Left cardiac atrium (tissue), 4 donors: ENCODE measurements at regions of chr14 and their contacts with region 1.

Region 1: GRCh38 chr14:73524493-73524892 is 12.4 kb upstream of the ACOT1 start:
- DNase-seq: no peak
- ATAC-seq: no peak

Region 2: DNA sequence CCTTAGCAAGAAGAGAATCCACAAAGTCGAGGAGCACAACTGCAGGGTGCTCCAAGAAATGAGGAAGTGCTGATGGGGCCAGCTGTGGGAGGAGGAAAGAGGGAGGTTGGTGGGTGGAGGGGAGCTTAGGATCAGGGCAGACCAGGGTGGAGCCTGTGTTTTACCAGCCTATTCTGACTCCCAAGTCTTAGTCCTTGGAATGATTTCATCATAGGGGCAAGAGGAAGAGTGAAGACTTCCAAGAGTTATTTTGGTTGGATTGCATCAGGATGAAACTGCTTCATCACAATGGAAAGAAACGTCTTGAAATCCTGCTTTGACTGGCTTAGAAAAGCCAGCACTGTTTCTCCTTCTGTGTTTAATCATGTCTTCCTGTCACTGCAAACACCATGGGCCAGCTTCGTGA is 824.6 kb before region 1 on chr14:
- intact Hi-C with region 1: no loop called
- DNase-seq: peak; percentile 53
- ATAC-seq: peak; percentile 24 to 75

Region 3: DNA sequence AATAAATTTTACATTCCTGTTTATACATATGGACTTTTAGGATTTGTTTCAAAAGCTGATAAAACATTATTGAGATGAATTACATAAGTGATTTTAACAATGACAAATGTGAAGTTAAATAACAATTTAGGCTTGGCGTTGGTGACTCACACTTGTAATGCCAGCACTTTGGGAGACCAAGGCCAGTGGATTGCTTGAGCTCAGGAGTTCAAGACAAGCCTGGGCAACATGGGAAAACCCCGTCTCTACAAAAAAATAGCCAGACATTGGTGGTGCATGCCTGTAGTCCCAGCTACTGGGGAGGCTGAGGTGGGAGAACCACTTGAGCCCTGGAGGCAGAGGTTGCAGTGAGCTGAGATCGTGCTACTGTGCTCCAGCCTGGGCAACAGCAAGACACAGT is 51.9 kb after region 1 on chr14:
- intact Hi-C with region 1: loop called in 1 of 2 experiments (anchors 10 kb)
- DNase-seq: no peak
- ATAC-seq: no peak

Region 4: GRCh38 chr14:73685328-73685727 is 160.8 kb after region 1 on chr14:
- intact Hi-C with region 1: no loop called
- DNase-seq: no peak
- ATAC-seq: no peak